PC-3 (cell line): ENCODE measurements at regions of chr2 and their contacts with region 1.

Region 1: DNA sequence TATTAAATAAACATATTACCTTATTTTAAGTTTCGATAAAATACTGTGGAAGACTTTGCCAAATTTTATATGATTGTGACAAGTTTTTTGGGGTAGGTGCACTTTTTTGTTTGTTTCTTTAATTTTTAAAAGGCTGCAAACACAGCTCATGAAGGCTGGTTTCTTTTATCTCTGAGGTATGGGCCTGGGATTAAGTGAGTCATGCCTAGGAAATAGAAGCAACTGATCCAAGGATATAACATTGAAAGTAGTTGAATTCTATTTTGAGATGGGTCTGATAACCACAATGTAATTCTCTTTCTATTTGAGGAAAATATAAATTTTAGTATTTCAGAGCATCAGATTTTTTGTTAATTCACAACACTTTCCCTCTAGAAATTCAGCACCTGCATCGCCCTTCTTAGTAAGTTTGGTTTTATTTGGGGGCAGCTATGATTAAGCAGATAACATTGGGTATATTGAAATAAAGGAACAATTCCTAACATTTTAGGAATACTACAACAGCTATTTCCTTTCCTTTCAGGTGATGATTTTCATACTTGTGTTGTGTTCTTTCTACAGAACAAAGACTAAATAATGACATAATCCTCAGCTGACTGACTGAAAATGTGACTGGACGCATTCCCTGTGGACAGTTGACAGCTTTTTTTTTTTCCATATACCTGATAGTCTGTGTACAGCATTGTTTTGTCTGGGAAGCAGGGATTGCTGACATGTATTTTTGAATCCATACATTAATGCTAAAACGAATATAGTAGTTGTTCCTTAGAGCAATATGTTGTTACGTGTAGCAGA is 16.8 kb downstream of the RBM45 start:
- DNase-seq: no peak
- ATAC-seq: no peak
- H3K4me3 ChIP-seq: no peak overlapping the region
- H3K27ac ChIP-seq: no peak overlapping the region
- H3K4me1 ChIP-seq: peaks cover 8% of the 10 kb centered on the region; the same call in 1 of the 2 replicates
- H3K27me3 ChIP-seq: no peaks in the 10 kb centered on the region
- CTCF ChIP-seq: no peak

Region 2: DNA sequence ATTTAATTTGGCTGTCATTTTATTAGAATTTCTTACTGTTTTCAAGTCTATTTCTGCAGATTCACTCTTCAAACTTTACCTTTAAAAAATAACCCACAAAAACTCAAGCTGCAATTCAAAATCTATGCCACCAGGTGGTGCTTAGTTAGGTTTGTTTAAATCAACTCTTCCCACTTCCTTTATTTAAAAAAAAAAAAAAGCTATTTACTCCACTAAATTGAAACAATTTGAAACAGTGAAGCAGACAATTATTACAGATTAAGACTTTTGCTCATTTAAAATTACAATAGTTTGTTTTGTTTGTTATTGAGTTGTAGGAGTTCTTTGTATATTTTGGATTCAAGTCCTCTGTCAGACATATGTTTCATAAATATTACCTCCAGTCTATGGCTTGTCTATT is 356.5 kb before region 1 on chr2:
- CTCF ChIA-PET with region 1: no interaction called
- POLR2A ChIA-PET with region 1: no interaction called
- intact Hi-C with region 1: no loop called
- DNase-seq: peak; percentile 76
- ATAC-seq: no peak
- H3K4me3 ChIP-seq: no peak overlapping the region
- H3K27ac ChIP-seq: no peak overlapping the region
- H3K4me1 ChIP-seq: no peaks in the 10 kb centered on the region
- H3K27me3 ChIP-seq: peaks cover 2% of the 10 kb centered on the region; the same call in 1 of the 2 replicates
- CTCF ChIP-seq: peak; percentile 66

Region 3: GRCh38 chr2:178193823-178194599 is 65.0 kb after region 1 on chr2 and contains the start of gene OSBPL6:
- CTCF ChIA-PET with region 1: no interaction called
- POLR2A ChIA-PET with region 1: no interaction called
- intact Hi-C with region 1: loop called (anchors 2 kb)
- DNase-seq: peak; percentile 84
- ATAC-seq: peak; percentile 82
- H3K4me3 ChIP-seq: peak within 1 kb of the TSS; percentile 83
- H3K27ac ChIP-seq: peak within 1 kb of the TSS; percentile 19; the same call in 1 of the 2 replicates
- H3K4me1 ChIP-seq: peaks cover 26% of the 10 kb centered on the region
- H3K27me3 ChIP-seq: no peaks in the 10 kb centered on the region
- CTCF ChIP-seq: peak; percentile 8; the same call in 1 of the 2 replicates
- total RNA-seq, gene OSBPL6: 2.8 and 4.0 TPM in 2 replicates

Region 4: GRCh38 chr2:178208817-178209216 is 79.8 kb after region 1 on chr2:
- CTCF ChIA-PET with region 1: no interaction called
- POLR2A ChIA-PET with region 1: no interaction called
- intact Hi-C with region 1: loop called (anchors 1 kb)
- DNase-seq: peak; percentile 43
- ATAC-seq: no peak
- H3K4me3 ChIP-seq: no peak overlapping the region
- H3K27ac ChIP-seq: no peak overlapping the region
- H3K4me1 ChIP-seq: peaks cover 13% of the 10 kb centered on the region
- H3K27me3 ChIP-seq: no peaks in the 10 kb centered on the region
- CTCF ChIP-seq: peak; percentile 68

Region 5: GRCh38 chr2:178280244-178280852 is 151.3 kb after region 1 on chr2:
- CTCF ChIA-PET with region 1: interaction called, 4 read pairs
- POLR2A ChIA-PET with region 1: no interaction called
- intact Hi-C with region 1: loop called (anchors 1 kb)
- DNase-seq: peak; percentile 80
- ATAC-seq: peak; percentile 15; the same call in 1 of the 2 replicates
- H3K4me3 ChIP-seq: no peak overlapping the region
- H3K27ac ChIP-seq: peak overlapping the region; percentile 79; the same call in 1 of the 2 replicates
- H3K4me1 ChIP-seq: peaks cover 30% of the 10 kb centered on the region
- H3K27me3 ChIP-seq: no peaks in the 10 kb centered on the region
- CTCF ChIP-seq: peak; percentile 81

Region 6: GRCh38 chr2:178397002-178397605 is 268.1 kb after region 1 on chr2:
- CTCF ChIA-PET with region 1: no interaction called
- POLR2A ChIA-PET with region 1: no interaction called
- intact Hi-C with region 1: loop called (anchors 5 kb)
- DNase-seq: peak; percentile 71
- ATAC-seq: peak; percentile 77
- H3K4me3 ChIP-seq: no peak overlapping the region
- H3K27ac ChIP-seq: no peak overlapping the region
- H3K4me1 ChIP-seq: peaks cover 8% of the 10 kb centered on the region; the same call in 1 of the 2 replicates
- H3K27me3 ChIP-seq: no peaks in the 10 kb centered on the region
- CTCF ChIP-seq: peak; percentile 80